Naive thymus-derived CD4-positive, alpha-beta T cell (primary cell): ENCODE measurements at regions of chr12 and their contacts with region 1.

Region 1: GRCh38 chr12:103495479-103496456 is at the start of gene C12orf42:
- DNase-seq: peak; percentile 39 to 63 (median 59)
- ATAC-seq: peak; percentile 83
- H3K4me3 ChIP-seq: peak within 1 kb of the TSS; percentile 48
- H3K4me3 Mint-ChIP-seq: peak within 1 kb of the TSS; percentile 80 to 91 (median 85)
- H3K27ac ChIP-seq: peak within 1 kb of the TSS; percentile 63
- H3K27ac Mint-ChIP-seq: peak within 1 kb of the TSS; percentile 57 to 91 (median 86)
- H3K4me1 ChIP-seq: no peaks in the 10 kb centered on the region
- H3K4me1 Mint-ChIP-seq: peaks cover 8 to 24% (median 21%) of the 10 kb centered on the region in 7 donors
- H3K27me3 ChIP-seq: no peaks in the 10 kb centered on the region
- H3K27me3 Mint-ChIP-seq: peaks cover 20 to 44% (median 32%) of the 10 kb centered on the region in 5 donors
- total RNA-seq, gene C12orf42: 2.6 to 15.4 (median 8.9) TPM

Region 2: DNA sequence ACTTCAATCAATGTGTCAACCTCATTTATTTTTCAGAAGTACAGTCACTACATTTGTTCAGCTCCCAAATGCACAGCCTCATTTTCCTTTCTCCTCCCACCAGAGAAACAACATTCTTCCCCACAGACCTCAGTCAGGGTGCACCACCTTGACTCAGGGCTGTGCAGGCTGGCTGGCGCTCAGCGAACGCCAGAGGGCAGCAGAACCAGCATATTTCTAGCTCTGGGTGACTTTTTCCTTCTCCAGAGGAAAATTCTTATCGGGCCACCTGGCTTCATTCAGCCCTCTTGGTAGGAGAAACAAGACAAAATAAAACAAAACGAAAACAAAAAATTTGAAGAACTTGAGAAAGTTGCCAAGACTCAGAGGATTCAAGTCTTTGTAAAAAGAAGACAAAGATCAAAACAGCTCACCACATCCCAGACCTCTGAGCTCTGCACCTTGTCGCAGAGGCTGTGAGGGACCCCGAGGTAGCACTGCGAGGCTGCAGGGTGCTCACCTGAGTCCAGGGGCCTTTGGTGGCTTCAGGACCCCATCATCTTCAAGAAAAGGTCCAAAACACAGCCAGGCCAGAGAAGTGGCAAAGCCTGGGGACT is 612.5 kb before region 1 on chr12:
- CTCF ChIA-PET with region 1: no interaction called
- POLR2A ChIA-PET with region 1: no interaction called
- intact Hi-C with region 1: loop called in 1 of 2 experiments (anchors 2 kb)
- DNase-seq: peak in 6 of 9 donors; percentile 10 to 33 (median 18)
- ATAC-seq: peak; percentile 48
- H3K4me3 ChIP-seq: no peak overlapping the region
- H3K4me3 Mint-ChIP-seq: no peak overlapping the region
- H3K27ac ChIP-seq: no peak overlapping the region
- H3K27ac Mint-ChIP-seq: no peak overlapping the region
- H3K4me1 ChIP-seq: no peaks in the 10 kb centered on the region
- H3K4me1 Mint-ChIP-seq: peaks cover 0 to 5% (median 0%) of the 10 kb centered on the region in 7 donors
- H3K27me3 ChIP-seq: no peaks in the 10 kb centered on the region
- H3K27me3 Mint-ChIP-seq: peaks cover 0 to 26% (median 19%) of the 10 kb centered on the region in 5 donors

Region 3: GRCh38 chr12:103279444-103279843 is 216.3 kb before region 1 on chr12:
- CTCF ChIA-PET with region 1: no interaction called
- POLR2A ChIA-PET with region 1: no interaction called
- intact Hi-C with region 1: loop called in 1 of 2 experiments (anchors 5 kb)
- DNase-seq: peak in 3 of 9 donors; percentile 1 to 26 (median 10)
- ATAC-seq: no peak
- H3K4me3 ChIP-seq: no peak overlapping the region
- H3K4me3 Mint-ChIP-seq: peak overlapping the region in 1 of 10 donors; percentile 44
- H3K27ac ChIP-seq: no peak overlapping the region
- H3K27ac Mint-ChIP-seq: peak overlapping the region in 2 of 9 donors; percentile 3 to 67
- H3K4me1 ChIP-seq: no peaks in the 10 kb centered on the region
- H3K4me1 Mint-ChIP-seq: peaks cover 0 to 22% (median 5%) of the 10 kb centered on the region in 7 donors
- H3K27me3 ChIP-seq: no peaks in the 10 kb centered on the region
- H3K27me3 Mint-ChIP-seq: peaks cover 0 to 11% (median 0%) of the 10 kb centered on the region in 5 donors

Region 4: GRCh38 chr12:103441437-103442181 is 54.2 kb before region 1 on chr12:
- CTCF ChIA-PET with region 1: no interaction called
- POLR2A ChIA-PET with region 1: interaction called, 8 read pairs
- intact Hi-C with region 1: loop called (anchors 1 to 5 kb)
- DNase-seq: peak in 8 of 9 donors; percentile 19 to 76 (median 58)
- ATAC-seq: peak; percentile 97
- H3K4me3 ChIP-seq: peak overlapping the region; percentile 26
- H3K4me3 Mint-ChIP-seq: peak overlapping the region; percentile 72 to 97 (median 91)
- H3K27ac ChIP-seq: peak overlapping the region; percentile 55
- H3K27ac Mint-ChIP-seq: peak overlapping the region; percentile 90 to 100 (median 97)
- H3K4me1 ChIP-seq: peaks cover 11 to 20% of the 10 kb centered on the region in 2 donors
- H3K4me1 Mint-ChIP-seq: peaks cover 0 to 33% (median 24%) of the 10 kb centered on the region in 7 donors
- H3K27me3 ChIP-seq: no peaks in the 10 kb centered on the region
- H3K27me3 Mint-ChIP-seq: no peaks in the 10 kb centered on the region

Region 5: DNA sequence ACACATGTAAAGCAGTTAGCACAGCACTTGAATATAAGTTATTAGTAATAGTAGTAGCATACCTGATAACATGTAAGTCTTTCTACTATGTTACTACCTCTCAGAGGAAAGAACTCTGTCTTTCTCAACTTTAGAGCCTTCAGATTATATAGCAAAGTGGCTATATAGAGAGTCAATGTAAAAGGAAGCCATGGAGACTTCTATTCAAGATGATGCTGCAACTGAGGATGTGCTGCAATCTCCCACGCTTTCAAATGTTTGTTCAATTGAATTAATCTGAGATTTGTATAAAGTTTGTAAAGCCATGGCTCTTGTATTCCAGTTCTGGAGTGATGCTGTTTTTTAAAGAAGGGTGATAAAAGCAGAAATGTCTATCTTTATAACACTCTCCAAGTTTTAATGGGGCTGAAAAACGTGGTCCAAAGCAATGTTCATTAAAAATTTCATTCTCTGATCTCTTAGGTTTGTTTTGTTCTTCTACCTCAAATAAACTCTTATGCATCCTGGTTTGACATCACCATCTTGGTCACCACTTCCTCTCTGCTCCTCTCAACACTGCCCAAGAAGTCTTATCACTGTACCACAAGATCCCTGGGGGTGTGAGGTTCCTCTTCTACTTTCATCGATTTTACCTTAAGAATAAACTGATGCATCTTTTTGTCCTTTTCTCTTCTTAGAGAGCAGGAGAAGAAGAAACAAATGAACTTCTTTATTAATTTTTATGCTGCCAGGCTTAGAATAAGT is 40.6 kb before region 1 on chr12:
- CTCF ChIA-PET with region 1: no interaction called
- POLR2A ChIA-PET with region 1: no interaction called
- intact Hi-C with region 1: loop called (anchors 2 to 5 kb)
- DNase-seq: peak in 7 of 9 donors; percentile 22 to 67 (median 49)
- ATAC-seq: peak; percentile 92
- H3K4me3 ChIP-seq: no peak overlapping the region
- H3K4me3 Mint-ChIP-seq: peak overlapping the region in 6 of 10 donors; percentile 9 to 56 (median 29)
- H3K27ac ChIP-seq: no peak overlapping the region
- H3K27ac Mint-ChIP-seq: peak overlapping the region; percentile 0 to 88 (median 61)
- H3K4me1 ChIP-seq: peaks cover 16 to 26% of the 10 kb centered on the region in 2 donors
- H3K4me1 Mint-ChIP-seq: peaks cover 8 to 60% (median 28%) of the 10 kb centered on the region in 7 donors
- H3K27me3 ChIP-seq: no peaks in the 10 kb centered on the region
- H3K27me3 Mint-ChIP-seq: peaks cover 0 to 3% (median 0%) of the 10 kb centered on the region in 5 donors